PC-9 (cell line): ENCODE measurements at regions of chr17 and their contacts with region 1.

Region 1: DNA sequence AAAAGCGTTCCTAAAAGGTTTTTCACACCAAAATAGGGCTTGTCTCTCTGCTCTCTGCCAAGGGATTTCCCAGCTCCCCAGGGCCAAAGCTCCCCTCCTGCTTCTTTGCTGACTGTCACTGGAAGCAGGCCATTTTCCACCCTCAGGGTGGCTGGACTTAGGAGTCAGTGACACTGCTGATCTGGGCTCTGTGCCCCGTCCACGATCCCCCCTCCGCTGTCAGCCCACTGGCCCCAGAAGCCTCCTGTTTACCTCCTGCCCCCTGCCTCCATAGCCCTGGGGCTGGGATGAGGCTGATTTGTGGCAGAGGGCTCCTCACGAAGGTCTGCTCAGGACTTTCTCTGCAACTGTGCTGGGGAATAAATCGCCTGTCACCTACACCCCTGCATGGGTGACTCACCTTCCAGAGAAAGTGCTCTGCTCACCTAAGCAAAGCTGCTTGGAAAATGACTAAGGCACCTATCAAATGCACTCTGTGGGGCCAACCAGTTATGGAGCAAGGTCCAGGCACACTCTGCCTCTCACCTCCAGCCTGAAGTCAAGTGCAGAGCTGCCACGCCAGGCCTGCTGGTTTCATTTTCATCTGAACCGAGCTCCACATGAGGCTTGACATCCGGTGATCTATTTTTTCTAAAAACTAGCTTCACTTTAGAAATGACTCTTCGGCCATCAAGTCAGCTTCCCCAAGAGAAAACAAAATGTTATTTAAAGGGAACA is 4.9 kb downstream of the MAP3K14 start:
- DNase-seq: peak; percentile 80 to 99
- H3K4me3 ChIP-seq: peak overlapping the region; percentile 40
- H3K27ac ChIP-seq: peak overlapping the region; percentile 80
- H3K4me1 ChIP-seq: peaks cover 77% of the 10 kb centered on the region
- H3K27me3 ChIP-seq: no peaks in the 10 kb centered on the region
- CTCF ChIP-seq: no peak

Region 2: GRCh38 chr17:45197555-45198334 is 114.2 kb before region 1 on chr17:
- CTCF ChIA-PET with region 1: interaction called, 18 read pairs
- POLR2A ChIA-PET with region 1: interaction called, 4 read pairs
- intact Hi-C with region 1: no loop called
- DNase-seq: peak; percentile 83 to 97
- H3K4me3 ChIP-seq: no peak overlapping the region
- H3K27ac ChIP-seq: peak overlapping the region; percentile 52
- H3K4me1 ChIP-seq: peaks cover 36% of the 10 kb centered on the region
- H3K27me3 ChIP-seq: no peaks in the 10 kb centered on the region
- CTCF ChIP-seq: peak; percentile 99

Region 3: DNA sequence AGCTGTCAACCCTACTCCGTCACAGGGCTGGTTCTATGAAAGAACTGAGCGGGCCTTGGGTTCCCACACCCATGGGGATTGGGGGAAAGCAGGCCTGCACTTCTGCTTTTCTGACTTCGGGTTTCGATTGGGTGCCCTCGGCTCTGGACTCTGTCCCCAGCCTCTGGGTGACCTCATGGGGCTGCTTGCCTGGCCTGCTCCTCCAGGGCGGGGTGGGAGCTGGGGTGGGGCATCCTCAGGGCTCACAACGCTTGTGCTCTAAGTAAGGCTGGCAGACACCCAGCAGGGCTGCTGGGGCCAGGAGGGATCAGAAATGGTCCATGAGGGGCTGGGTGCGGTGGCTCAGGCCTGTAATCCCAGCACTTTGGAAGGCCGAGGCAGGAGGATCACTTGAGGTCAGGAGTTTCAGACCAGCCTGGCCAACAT is 101.6 kb after region 1 on chr17:
- CTCF ChIA-PET with region 1: no interaction called
- POLR2A ChIA-PET with region 1: interaction called, 26 read pairs
- intact Hi-C with region 1: no loop called
- DNase-seq: no peak
- H3K4me3 ChIP-seq: no peak overlapping the region
- H3K27ac ChIP-seq: no peak overlapping the region
- H3K4me1 ChIP-seq: no peaks in the 10 kb centered on the region
- H3K27me3 ChIP-seq: no peaks in the 10 kb centered on the region
- CTCF ChIP-seq: no peak